MCF 10A (cell line): ENCODE measurements at regions of chr18 and their contacts with region 1.

Region 1: GRCh38 chr18:62249478-62250097 is 62.5 kb downstream of the RELCH start:
- DNase-seq: peak; percentile 80
- H3K4me3 Mint-ChIP-seq: no peak overlapping the region
- H3K27ac Mint-ChIP-seq: no peak overlapping the region
- H3K4me1 Mint-ChIP-seq: no peaks in the 10 kb centered on the region
- H3K27me3 Mint-ChIP-seq: no peaks in the 10 kb centered on the region
- CTCF ChIP-seq: peak; percentile 55

Region 2: GRCh38 chr18:62198259-62198658 is 51.3 kb before region 1 on chr18:
- CTCF ChIA-PET with region 1: interaction called, 11 read pairs
- POLR2A ChIA-PET with region 1: interaction called, 7 read pairs
- intact Hi-C with region 1: no loop called
- DNase-seq: peak; percentile 41
- H3K4me3 Mint-ChIP-seq: no peak overlapping the region
- H3K27ac Mint-ChIP-seq: peak overlapping the region; percentile 68
- H3K4me1 Mint-ChIP-seq: peaks cover 14% of the 10 kb centered on the region
- H3K27me3 Mint-ChIP-seq: no peaks in the 10 kb centered on the region
- CTCF ChIP-seq: no peak

Region 3: DNA sequence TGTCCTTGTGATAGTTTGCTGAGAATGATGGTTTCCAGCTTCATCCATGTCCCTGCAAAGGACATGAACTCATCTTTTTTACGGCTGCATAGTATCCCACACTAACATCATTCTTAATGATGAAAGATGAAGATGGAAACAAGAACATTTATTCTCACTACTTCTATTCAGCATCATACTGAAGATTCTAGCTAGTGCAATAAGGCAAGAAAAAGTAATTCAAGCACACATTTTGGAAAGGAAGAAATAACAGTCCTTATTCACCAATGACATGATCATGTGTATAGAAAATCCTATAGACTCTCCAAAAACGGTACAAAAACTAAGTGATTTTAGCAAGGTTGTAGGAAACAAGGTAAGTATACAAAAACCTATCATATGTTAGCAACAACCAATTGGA is 25.4 kb before region 1 on chr18:
- CTCF ChIA-PET with region 1: interaction called, 24 read pairs
- POLR2A ChIA-PET with region 1: interaction called, 8 read pairs
- intact Hi-C with region 1: no loop called
- DNase-seq: no peak
- H3K4me3 Mint-ChIP-seq: no peak overlapping the region
- H3K27ac Mint-ChIP-seq: no peak overlapping the region
- H3K4me1 Mint-ChIP-seq: no peaks in the 10 kb centered on the region
- H3K27me3 Mint-ChIP-seq: no peaks in the 10 kb centered on the region
- CTCF ChIP-seq: no peak

Region 4: GRCh38 chr18:62264984-62265383 is 15.4 kb after region 1 on chr18:
- CTCF ChIA-PET with region 1: interaction called, 20 read pairs
- POLR2A ChIA-PET with region 1: interaction called, 3 read pairs
- intact Hi-C with region 1: no loop called
- DNase-seq: no peak
- H3K4me3 Mint-ChIP-seq: no peak overlapping the region
- H3K27ac Mint-ChIP-seq: no peak overlapping the region
- H3K4me1 Mint-ChIP-seq: no peaks in the 10 kb centered on the region
- H3K27me3 Mint-ChIP-seq: no peaks in the 10 kb centered on the region
- CTCF ChIP-seq: no peak